HCT116 (cell line): ENCODE measurements at regions of chr1 and their contacts with region 1.

Region 1: GRCh38 chr1:7026169-7026568 is 240.9 kb downstream of the CAMTA1 start:
- DNase-seq: no peak
- ATAC-seq: peak; percentile 52
- H3K4me3 ChIP-seq: no peak overlapping the region
- H3K27ac ChIP-seq: no peak overlapping the region
- H3K4me1 ChIP-seq: peaks cover 0 to 12% of the 10 kb centered on the region in 2 experiments; a peak in 2 of 4 replicates
- H3K27me3 ChIP-seq: peaks cover 16% of the 10 kb centered on the region; the same call in 1 of the 2 replicates
- CTCF ChIP-seq: no peak
- POLR2A ChIP-seq: no peak
- RAD21 ChIP-seq: no peak

Region 2: DNA sequence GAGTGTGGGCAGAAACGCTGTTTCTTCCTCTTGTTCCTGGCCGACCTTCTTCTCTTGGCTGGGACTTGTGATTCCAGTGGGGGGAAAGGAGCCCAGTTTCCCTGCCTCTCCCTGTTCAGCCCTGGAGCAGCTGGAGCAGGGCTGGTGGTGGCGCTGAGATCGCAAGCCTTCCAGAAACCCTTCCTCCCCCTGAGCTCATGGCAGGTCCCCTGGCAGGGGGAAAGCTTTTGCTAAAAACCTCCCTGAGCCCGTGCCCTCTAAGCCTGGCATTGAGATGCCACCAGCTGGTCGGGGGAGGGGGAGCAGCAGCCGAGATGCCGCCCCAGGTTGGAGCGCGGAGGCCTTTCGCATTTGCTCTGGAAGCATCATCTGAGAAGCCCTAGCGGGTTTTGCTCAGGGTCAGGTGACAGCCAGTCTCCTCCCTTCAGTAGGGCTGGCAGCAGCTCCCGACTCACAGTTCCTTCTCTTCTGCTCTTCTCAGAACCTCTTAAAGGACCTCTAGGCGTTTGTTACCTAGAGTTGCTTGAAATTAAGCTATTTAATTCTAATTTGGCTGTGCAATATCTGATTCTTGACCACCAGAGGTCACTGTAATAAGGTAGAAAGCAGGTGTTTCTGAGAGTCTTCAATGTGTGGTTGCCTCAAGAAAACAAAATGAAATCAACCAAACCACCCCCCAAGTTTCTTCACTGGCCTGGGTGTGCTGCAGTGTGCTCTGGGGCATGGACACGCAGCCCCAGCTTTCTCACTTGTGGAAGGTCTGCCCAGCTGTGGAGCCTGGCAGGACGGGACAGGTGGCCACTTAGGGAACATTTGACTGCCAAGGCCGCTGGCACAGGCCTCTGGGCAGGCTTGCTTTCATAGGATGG is 16.4 kb after region 1 on chr1:
- CTCF ChIA-PET with region 1: interaction called, 11 read pairs
- POLR2A ChIA-PET with region 1: no interaction called
- RAD21 ChIA-PET with region 1: no interaction called
- intact Hi-C with region 1: no loop called
- DNase-seq: peak; percentile 10
- ATAC-seq: peak; percentile 87
- H3K4me3 ChIP-seq: no peak overlapping the region
- H3K27ac ChIP-seq: no peak overlapping the region
- H3K4me1 ChIP-seq: no peaks in the 10 kb centered on the region
- H3K27me3 ChIP-seq: peaks cover 11% of the 10 kb centered on the region
- CTCF ChIP-seq: peak; percentile 49 to 74 (median 69)
- POLR2A ChIP-seq: no peak
- RAD21 ChIP-seq: peak; percentile 75